Right cardiac atrium (tissue), 5 donors: ENCODE measurements at regions of chr11 and their contacts with region 1.

Region 1: DNA sequence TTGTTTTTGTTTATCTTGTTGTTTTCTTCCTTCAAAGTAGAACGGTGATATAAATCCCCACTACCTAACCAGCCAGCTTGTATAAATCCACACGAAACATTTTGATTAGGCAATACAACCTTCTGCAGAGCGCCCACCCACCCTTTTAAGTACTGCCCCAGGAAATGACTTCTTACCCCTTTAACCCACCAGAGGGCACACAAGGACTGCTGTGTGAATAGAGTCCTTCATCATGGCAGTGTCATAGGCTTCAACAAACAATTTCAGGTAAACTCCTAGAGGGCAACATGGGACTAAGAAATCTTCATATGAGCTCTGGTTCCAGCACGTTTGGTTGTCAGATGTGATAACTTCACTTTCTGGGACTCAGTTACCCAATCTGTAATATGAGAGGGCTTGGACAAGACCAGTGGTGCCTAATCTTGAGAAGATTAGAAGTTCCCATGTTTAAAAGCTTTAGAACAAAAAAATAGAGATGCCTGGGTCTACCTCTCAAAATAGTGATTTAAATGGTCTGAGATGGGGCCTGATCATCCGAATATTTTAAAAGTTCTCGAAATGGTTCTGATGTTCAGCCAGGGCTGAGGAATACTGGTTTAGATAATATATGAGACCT is 56.1 kb downstream of the PIWIL4 start:
- DNase-seq: peak in 1 of 3 donors; percentile 42
- ATAC-seq: peak; percentile 89 to 94
- H3K4me3 ChIP-seq: no peak overlapping the region
- H3K27ac ChIP-seq: no peak overlapping the region
- H3K4me1 ChIP-seq: no peaks in the 10 kb centered on the region
- H3K27me3 ChIP-seq: no peaks in the 10 kb centered on the region

Region 2: GRCh38 chr11:94583866-94584500 is 39.2 kb before region 1 on chr11:
- intact Hi-C with region 1: no loop called
- DNase-seq: no peak
- ATAC-seq: no peak
- H3K4me3 ChIP-seq: no peak overlapping the region
- H3K27ac ChIP-seq: no peak overlapping the region
- H3K4me1 ChIP-seq: no peaks in the 10 kb centered on the region
- H3K27me3 ChIP-seq: no peaks in the 10 kb centered on the region

Region 3: GRCh38 chr11:94767761-94768601 is 144.8 kb after region 1 on chr11 and contains the start of gene AMOTL1:
- intact Hi-C with region 1: loop called (anchors 5 to 10 kb)
- DNase-seq: peak; percentile 97
- ATAC-seq: peak; percentile 97 to 98
- H3K4me3 ChIP-seq: peak within 1 kb of the TSS; percentile 69
- H3K27ac ChIP-seq: peak within 1 kb of the TSS; percentile 65
- H3K4me1 ChIP-seq: peaks cover 5% of the 10 kb centered on the region
- H3K27me3 ChIP-seq: no peaks in the 10 kb centered on the region
- total RNA-seq, gene AMOTL1: 46.6 to 84.1 (median 55.3) TPM

Region 4: DNA sequence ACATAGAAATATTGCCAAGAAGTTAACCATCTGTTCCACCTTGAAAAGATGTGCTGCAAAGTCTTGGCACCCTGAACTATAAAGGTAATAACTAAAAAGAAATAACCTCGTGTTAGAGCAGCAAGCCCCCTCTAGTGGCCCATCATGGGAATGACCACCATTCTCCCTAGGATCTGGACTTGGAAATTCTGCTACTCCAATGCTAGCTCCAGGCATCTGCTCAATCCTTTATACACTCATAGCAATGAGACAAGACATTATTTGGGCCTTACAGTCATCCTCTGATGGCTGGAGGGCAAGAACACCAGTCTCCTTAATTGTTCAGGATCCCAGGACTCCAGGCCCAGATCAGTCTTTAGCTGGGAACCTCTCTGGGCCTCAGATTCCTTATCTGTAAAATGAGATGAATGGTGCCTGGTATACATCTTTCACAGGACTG is 274.1 kb after region 1 on chr11:
- intact Hi-C with region 1: loop called (anchors 2 to 5 kb)
- DNase-seq: peak; percentile 39 to 82 (median 55)
- ATAC-seq: peak; percentile 24 to 59
- H3K4me3 ChIP-seq: no peak overlapping the region
- H3K27ac ChIP-seq: no peak overlapping the region
- H3K4me1 ChIP-seq: peaks cover 1% of the 10 kb centered on the region
- H3K27me3 ChIP-seq: no peaks in the 10 kb centered on the region

Region 5: GRCh38 chr11:94958121-94958696 is 335.0 kb after region 1 on chr11:
- intact Hi-C with region 1: loop called in 1 of 4 experiments (anchors 10 kb)
- DNase-seq: no peak
- ATAC-seq: no peak
- H3K4me3 ChIP-seq: no peak overlapping the region
- H3K27ac ChIP-seq: no peak overlapping the region
- H3K4me1 ChIP-seq: no peaks in the 10 kb centered on the region
- H3K27me3 ChIP-seq: no peaks in the 10 kb centered on the region

Region 6: DNA sequence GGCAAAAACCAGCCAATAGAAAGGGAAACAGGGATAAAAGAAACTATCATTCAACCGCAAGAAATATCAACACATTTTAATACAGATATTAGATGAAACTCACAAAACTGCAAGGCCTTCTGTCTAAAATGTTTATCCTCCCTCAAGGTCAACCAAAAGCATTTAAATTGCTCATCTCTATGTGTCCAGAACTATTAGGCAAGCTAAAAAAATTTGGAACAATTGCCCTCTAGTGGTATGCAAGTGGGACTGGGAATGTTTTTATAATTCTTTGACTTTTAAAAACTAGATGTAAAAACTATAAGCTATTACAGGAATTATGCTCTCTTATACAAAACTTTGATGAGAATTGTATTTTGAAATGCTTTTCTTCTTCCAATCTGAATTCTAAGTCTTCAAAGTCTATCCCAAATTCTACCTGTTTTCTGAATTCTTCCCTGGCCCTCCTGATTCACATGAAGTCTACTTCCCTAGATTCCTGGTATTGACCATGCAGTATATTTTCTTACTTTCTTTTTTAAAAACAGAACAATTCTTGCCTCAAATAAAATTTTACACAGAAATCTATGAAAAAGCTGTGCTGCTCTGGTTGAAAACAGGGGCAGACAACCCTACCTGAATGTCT is 345.2 kb after region 1 on chr11:
- intact Hi-C with region 1: loop called in 1 of 4 experiments (anchors 5 kb)
- DNase-seq: no peak
- ATAC-seq: no peak
- H3K4me3 ChIP-seq: no peak overlapping the region
- H3K27ac ChIP-seq: no peak overlapping the region
- H3K4me1 ChIP-seq: no peaks in the 10 kb centered on the region
- H3K27me3 ChIP-seq: no peaks in the 10 kb centered on the region